IMR-90 (cell line): ENCODE measurements at regions of chr14 and their contacts with region 1.

Region 1: DNA sequence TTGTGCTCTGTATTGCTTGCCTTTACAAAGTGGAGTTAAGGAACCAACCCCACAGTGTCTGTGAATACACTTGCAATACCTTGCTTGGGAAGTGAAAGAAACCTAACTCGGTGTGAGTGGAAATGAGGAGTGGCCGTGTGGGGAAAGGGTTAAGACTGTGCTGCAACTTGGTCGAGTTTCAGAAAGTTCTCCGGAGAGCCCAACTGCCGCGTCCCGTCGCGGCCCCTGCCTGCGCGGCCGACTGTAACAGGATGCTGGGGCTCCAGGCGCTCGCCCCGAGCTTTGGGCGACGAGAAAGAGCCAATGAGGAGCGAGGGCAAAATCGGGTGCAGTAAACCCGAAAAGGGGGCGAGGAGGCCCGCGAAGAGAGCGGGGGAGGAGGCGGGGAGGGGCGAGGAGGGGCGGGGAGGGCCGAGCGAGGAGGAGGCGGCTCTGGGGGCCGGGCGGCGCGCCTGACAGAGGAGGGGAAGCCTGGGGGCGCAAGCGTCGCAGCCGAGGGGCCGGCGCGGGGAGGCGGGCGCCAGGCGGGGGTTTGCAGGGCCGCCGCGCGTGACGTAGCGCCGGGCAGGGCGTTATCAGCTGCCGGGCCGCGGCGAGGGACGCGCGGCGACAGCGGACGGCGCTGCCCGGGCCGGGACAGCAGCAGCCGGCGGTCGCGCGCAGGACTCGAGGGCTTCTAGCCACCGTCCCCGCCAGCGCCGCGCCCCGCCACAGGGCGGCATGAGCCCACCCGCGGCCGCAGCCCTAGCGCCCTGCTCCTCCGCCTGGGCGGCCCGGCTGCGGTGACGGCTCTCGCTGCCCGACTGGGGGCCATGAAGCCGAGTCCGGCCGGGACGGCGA is at the start of gene DACT1:
- DNase-seq: peak; percentile 79
- ATAC-seq: peak; percentile 79
- H3K4me3 ChIP-seq: peak within 1 kb of the TSS; percentile 81
- H3K27ac ChIP-seq: peak within 1 kb of the TSS; percentile 81
- H3K4me1 ChIP-seq: peaks cover 1% of the 10 kb centered on the region; the same call in 1 of the 2 replicates
- H3K27me3 ChIP-seq: no peaks in the 10 kb centered on the region
- CTCF ChIP-seq: 0 out of 2 replicates have a peak, but pooled peaks have one; percentile 13
- POLR2A ChIP-seq: peak; percentile 95
- RAD21 ChIP-seq: peak; percentile 19
- total RNA-seq, gene DACT1: 8.1 and 9.7 TPM in 2 replicates

Region 2: GRCh38 chr14:58501214-58501816 is 136.3 kb before region 1 on chr14:
- CTCF ChIA-PET with region 1: interaction called, 41 read pairs
- POLR2A ChIA-PET with region 1: interaction called, 3 read pairs
- dilution Hi-C with region 1: no loop called
- in situ Hi-C with region 1: loop called (anchors 5 kb)
- intact Hi-C with region 1: loop called (anchors 1 kb)
- DNase-seq: peak; percentile 88
- ATAC-seq: peak; percentile 89
- H3K4me3 ChIP-seq: no peak overlapping the region
- H3K27ac ChIP-seq: no peak overlapping the region
- H3K4me1 ChIP-seq: no peaks in the 10 kb centered on the region
- H3K27me3 ChIP-seq: no peaks in the 10 kb centered on the region
- CTCF ChIP-seq: peak; percentile 93
- POLR2A ChIP-seq: no peak
- RAD21 ChIP-seq: peak; percentile 96

Region 3: GRCh38 chr14:58598028-58598803 is 39.4 kb before region 1 on chr14:
- CTCF ChIA-PET with region 1: no interaction called
- POLR2A ChIA-PET with region 1: interaction called, 21 read pairs
- dilution Hi-C with region 1: no loop called
- in situ Hi-C with region 1: no loop called
- intact Hi-C with region 1: no loop called
- DNase-seq: peak; percentile 22
- ATAC-seq: peak; percentile 82
- H3K4me3 ChIP-seq: no peak overlapping the region
- H3K27ac ChIP-seq: no peak overlapping the region; the same call in 1 of the 2 replicates
- H3K4me1 ChIP-seq: peaks cover 7% of the 10 kb centered on the region
- H3K27me3 ChIP-seq: no peaks in the 10 kb centered on the region
- CTCF ChIP-seq: no peak
- POLR2A ChIP-seq: no peak
- RAD21 ChIP-seq: no peak

Region 4: DNA sequence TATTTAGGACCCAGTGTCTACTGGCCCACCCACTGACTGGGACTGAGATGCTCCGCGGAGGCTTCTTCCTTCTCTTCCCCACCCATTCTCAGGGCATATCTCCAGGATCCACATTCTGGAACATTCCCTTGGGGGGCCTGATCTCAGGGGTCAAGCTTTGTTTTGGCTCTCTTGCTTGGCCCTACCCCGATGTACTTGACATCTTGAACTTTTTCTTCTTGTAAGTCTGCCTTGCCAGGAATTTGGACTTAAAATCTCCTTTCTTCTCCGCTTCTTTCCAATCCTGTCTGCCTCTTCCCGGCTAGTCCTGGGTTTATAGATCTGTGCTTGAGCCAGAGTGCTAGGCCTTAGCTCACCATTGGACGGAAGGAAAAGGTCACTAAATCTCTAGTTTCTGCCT is 22.2 kb after region 1 on chr14:
- CTCF ChIA-PET with region 1: no interaction called
- POLR2A ChIA-PET with region 1: no interaction called
- dilution Hi-C with region 1: no loop called
- in situ Hi-C with region 1: no loop called
- intact Hi-C with region 1: no loop called
- DNase-seq: no peak
- ATAC-seq: no peak
- H3K4me3 ChIP-seq: no peak overlapping the region
- H3K27ac ChIP-seq: no peak overlapping the region
- H3K4me1 ChIP-seq: peaks cover 4% of the 10 kb centered on the region; the same call in 1 of the 2 replicates
- H3K27me3 ChIP-seq: no peaks in the 10 kb centered on the region; the same call in 1 of the 2 replicates
- CTCF ChIP-seq: no peak
- POLR2A ChIP-seq: no peak
- RAD21 ChIP-seq: no peak

Region 5: GRCh38 chr14:59004012-59004411 is 366.4 kb after region 1 on chr14:
- CTCF ChIA-PET with region 1: interaction called, 7 read pairs
- POLR2A ChIA-PET with region 1: no interaction called
- dilution Hi-C with region 1: no loop called
- in situ Hi-C with region 1: no loop called
- intact Hi-C with region 1: loop called (anchors 1 kb)
- DNase-seq: peak; percentile 14
- ATAC-seq: peak; percentile 29; the same call in 1 of the 2 replicates
- H3K4me3 ChIP-seq: no peak overlapping the region
- H3K27ac ChIP-seq: no peak overlapping the region
- H3K4me1 ChIP-seq: no peaks in the 10 kb centered on the region
- H3K27me3 ChIP-seq: peaks cover 3% of the 10 kb centered on the region; the same call in 1 of the 2 replicates
- CTCF ChIP-seq: peak; percentile 37
- POLR2A ChIP-seq: no peak
- RAD21 ChIP-seq: peak; percentile 48

Region 6: DNA sequence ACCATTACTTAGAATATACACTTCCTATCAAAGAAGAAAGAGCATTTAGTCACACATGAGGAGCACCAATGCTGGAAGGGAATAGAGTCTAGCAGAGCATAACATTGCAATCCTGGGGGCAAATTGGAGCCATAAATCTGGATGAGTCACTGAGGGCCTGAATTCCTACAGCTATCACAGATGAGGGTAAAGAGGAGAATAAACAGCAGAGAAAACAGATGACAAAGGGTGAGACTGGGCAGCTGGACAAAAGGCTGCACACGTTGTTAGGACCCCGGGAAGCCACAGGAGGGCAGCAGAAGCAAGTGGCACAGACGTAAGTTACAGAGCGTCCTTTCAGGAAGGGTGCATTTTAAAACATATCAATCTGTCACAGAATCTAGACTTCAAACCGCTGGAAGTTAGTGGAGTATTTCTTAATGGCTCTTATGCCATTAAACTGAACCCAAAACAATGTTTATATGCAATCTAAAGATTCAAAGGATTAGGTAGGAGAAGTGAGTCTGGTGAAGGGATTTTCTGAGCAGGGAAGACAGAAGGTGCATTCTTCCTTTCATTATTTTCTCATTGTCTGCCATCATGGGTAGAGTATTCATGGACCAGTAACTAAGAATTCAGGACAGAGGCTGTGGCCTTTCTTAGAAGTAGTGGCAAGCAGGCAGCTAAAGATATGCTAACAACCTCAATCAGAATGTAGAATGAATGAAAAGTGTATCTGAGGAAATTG is 391.0 kb after region 1 on chr14:
- CTCF ChIA-PET with region 1: interaction called, 3 read pairs
- POLR2A ChIA-PET with region 1: no interaction called
- dilution Hi-C with region 1: no loop called
- in situ Hi-C with region 1: loop called (anchors 10 kb)
- intact Hi-C with region 1: loop called (anchors 1 kb)
- DNase-seq: peak; percentile 97
- ATAC-seq: peak; percentile 99
- H3K4me3 ChIP-seq: no peak overlapping the region
- H3K27ac ChIP-seq: no peak overlapping the region
- H3K4me1 ChIP-seq: no peaks in the 10 kb centered on the region
- H3K27me3 ChIP-seq: no peaks in the 10 kb centered on the region
- CTCF ChIP-seq: peak; percentile 95
- POLR2A ChIP-seq: no peak
- RAD21 ChIP-seq: peak; percentile 89

Region 7: GRCh38 chr14:59120921-59121320 is 483.3 kb after region 1 on chr14:
- CTCF ChIA-PET with region 1: interaction called, 3 read pairs
- POLR2A ChIA-PET with region 1: no interaction called
- dilution Hi-C with region 1: no loop called
- in situ Hi-C with region 1: no loop called
- intact Hi-C with region 1: loop called (anchors 1 kb)
- DNase-seq: no peak
- ATAC-seq: peak; percentile 19; the same call in 1 of the 2 replicates
- H3K4me3 ChIP-seq: no peak overlapping the region
- H3K27ac ChIP-seq: peak overlapping the region; percentile 49; the same call in 1 of the 2 replicates
- H3K4me1 ChIP-seq: peaks cover 5% of the 10 kb centered on the region; the same call in 1 of the 2 replicates
- H3K27me3 ChIP-seq: peaks cover 2% of the 10 kb centered on the region
- CTCF ChIP-seq: no peak
- POLR2A ChIP-seq: no peak
- RAD21 ChIP-seq: no peak

Region 8: GRCh38 chr14:59464486-59465315 is 827.1 kb after region 1 on chr14:
- CTCF ChIA-PET with region 1: no interaction called
- POLR2A ChIA-PET with region 1: no interaction called
- dilution Hi-C with region 1: no loop called
- in situ Hi-C with region 1: loop called (anchors 25 kb)
- intact Hi-C with region 1: no loop called
- DNase-seq: peak; percentile 56
- ATAC-seq: peak; percentile 86
- H3K4me3 ChIP-seq: peak overlapping the region; percentile 38
- H3K27ac ChIP-seq: peak overlapping the region; percentile 24; the same call in 1 of the 2 replicates
- H3K4me1 ChIP-seq: peaks cover 6% of the 10 kb centered on the region
- H3K27me3 ChIP-seq: no peaks in the 10 kb centered on the region
- CTCF ChIP-seq: no peak
- POLR2A ChIP-seq: no peak
- RAD21 ChIP-seq: no peak